CD14-positive monocyte (primary cell): ENCODE measurements at regions of chr19 and their contacts with region 1.

Region 1: GRCh38 chr19:34253699-34254551 is 429 bp upstream of the GARRE1 start:
- DNase-seq: peak; percentile 52 to 63 (median 60)
- H3K4me3 ChIP-seq: peak overlapping the region; percentile 74 to 90 (median 81)
- H3K4me3 Mint-ChIP-seq: peak overlapping the region; percentile 96 to 97
- H3K27ac ChIP-seq: peak overlapping the region in 1 of 2 donors; percentile 69
- H3K27ac Mint-ChIP-seq: peak overlapping the region in 6 of 7 donors; percentile 62 to 91 (median 82)
- H3K4me1 ChIP-seq: peaks cover 11 to 14% of the 10 kb centered on the region in 2 donors
- H3K4me1 Mint-ChIP-seq: peaks cover 15% of the 10 kb centered on the region
- H3K27me3 ChIP-seq: peaks cover 20 to 41% of the 10 kb centered on the region in 2 donors
- H3K27me3 Mint-ChIP-seq: peaks cover 49 to 64% (median 58%) of the 10 kb centered on the region in 3 donors
- CTCF ChIP-seq: no peak

Region 2: DNA sequence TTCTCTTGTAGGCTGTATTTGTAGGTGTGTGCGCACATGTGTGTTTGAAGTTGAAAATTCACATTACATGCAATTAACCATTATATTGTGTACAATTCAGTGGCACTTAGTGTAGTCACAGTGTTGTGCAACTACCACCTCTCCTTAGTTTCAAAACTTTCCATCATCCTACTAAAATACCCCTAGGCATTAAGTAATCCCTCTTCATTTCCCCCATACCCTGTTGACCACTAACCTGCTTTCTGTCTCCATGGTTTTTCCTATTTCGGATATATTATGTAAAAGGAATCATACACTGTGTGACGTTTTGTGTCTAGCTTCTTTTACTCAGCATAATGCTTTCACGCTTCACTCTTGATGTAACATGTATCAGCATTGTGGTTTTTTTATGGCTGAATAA is 65.5 kb before region 1 on chr19:
- intact Hi-C with region 1: no loop called
- DNase-seq: peak in 2 of 3 donors; percentile 23 to 60
- H3K4me3 ChIP-seq: no peak overlapping the region
- H3K4me3 Mint-ChIP-seq: no peak overlapping the region
- H3K27ac ChIP-seq: peak overlapping the region in 1 of 2 donors; percentile 64
- H3K27ac Mint-ChIP-seq: peak overlapping the region in 6 of 7 donors; percentile 12 to 84 (median 46)
- H3K4me1 ChIP-seq: peaks cover 21 to 22% of the 10 kb centered on the region in 2 donors
- H3K4me1 Mint-ChIP-seq: peaks cover 49% of the 10 kb centered on the region
- H3K27me3 ChIP-seq: no peaks in the 10 kb centered on the region
- H3K27me3 Mint-ChIP-seq: no peaks in the 10 kb centered on the region
- CTCF ChIP-seq: no peak

Region 3: GRCh38 chr19:34336781-34337271 is 82.9 kb after region 1 on chr19:
- intact Hi-C with region 1: loop called (anchors 5 to 10 kb)
- DNase-seq: peak; percentile 15 to 29 (median 23)
- H3K4me3 ChIP-seq: no peak overlapping the region
- H3K4me3 Mint-ChIP-seq: no peak overlapping the region
- H3K27ac ChIP-seq: no peak overlapping the region
- H3K27ac Mint-ChIP-seq: no peak overlapping the region
- H3K4me1 ChIP-seq: no peaks in the 10 kb centered on the region
- H3K4me1 Mint-ChIP-seq: no peaks in the 10 kb centered on the region
- H3K27me3 ChIP-seq: no peaks in the 10 kb centered on the region
- H3K27me3 Mint-ChIP-seq: peaks cover 6 to 9% (median 6%) of the 10 kb centered on the region in 3 donors
- CTCF ChIP-seq: peak; percentile 88